Activated CD8-positive, alpha-beta memory T cell treated with anti-CD3 and anti-CD28 coated beads, Interleukin-2, amount 10 ng/mL, durations not matched to agents 7 days and 5 days (primary cell): ENCODE measurements at regions of chr3 and their contacts with region 1.

Region 1: GRCh38 chr3:46297658-46298463 is 55.6 kb downstream of the CCR3 start:
- DNase-seq: no peak
- ATAC-seq: no peak
- H3K4me3 Mint-ChIP-seq: no peak overlapping the region
- H3K27ac Mint-ChIP-seq: peak overlapping the region; percentile 96
- H3K4me1 Mint-ChIP-seq: peaks cover 92% of the 10 kb centered on the region
- H3K27me3 Mint-ChIP-seq: peaks cover 4% of the 10 kb centered on the region

Region 2: GRCh38 chr3:46284981-46285683 is 12.7 kb before region 1 on chr3:
- CTCF ChIA-PET with region 1: interaction called, 30 read pairs
- DNase-seq: peak; percentile 84
- ATAC-seq: peak; percentile 64
- H3K4me3 Mint-ChIP-seq: peak overlapping the region; percentile 21
- H3K27ac Mint-ChIP-seq: peak overlapping the region; percentile 91
- H3K4me1 Mint-ChIP-seq: peaks cover 93% of the 10 kb centered on the region
- H3K27me3 Mint-ChIP-seq: no peaks in the 10 kb centered on the region